Posterior vena cava (tissue), 2 donors: ENCODE measurements at regions of chr4 and their contacts with region 1.

Region 1: DNA sequence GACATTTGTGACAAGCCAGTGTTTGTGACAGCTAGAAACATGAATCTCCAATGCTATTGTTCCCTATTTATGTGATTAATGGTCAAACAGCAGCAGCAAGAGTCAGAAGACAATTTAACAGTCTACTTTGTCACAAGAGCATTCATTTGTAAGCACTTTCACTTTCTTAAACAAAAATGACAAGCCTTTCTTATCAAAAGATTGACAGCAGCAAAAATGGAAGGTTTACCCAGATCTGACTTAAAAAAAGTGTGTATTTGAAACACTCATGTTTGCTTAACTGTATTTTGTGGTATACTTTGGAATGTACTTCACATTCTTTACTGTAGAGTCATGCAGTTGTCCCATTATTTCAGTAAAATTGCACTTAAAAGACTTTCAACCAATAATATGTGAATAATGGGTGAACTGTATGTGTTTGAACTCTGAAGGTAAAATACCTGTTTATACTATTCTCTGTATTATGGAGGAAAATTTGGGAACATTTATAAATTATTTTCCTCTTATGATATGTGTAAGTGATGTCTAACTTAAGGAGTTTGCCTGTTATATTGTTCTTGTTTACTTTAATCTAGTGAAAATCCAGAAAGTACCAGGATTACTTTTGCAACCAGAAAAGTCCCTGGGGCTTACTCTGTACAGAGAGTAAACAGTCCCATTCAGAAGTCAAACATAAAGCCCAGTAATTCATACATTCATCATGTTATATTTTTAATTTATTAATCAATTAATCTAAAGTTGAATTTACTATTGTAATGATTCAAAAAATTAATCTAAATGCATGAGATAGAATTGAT is 314.9 kb upstream of the TRAM1L1 start:
- DNase-seq: no peak

Region 2: GRCh38 chr4:116849620-116850019 is 550.6 kb before region 1 on chr4:
- intact Hi-C with region 1: loop called in 1 of 2 experiments (anchors 10 kb)
- DNase-seq: no peak

Region 3: DNA sequence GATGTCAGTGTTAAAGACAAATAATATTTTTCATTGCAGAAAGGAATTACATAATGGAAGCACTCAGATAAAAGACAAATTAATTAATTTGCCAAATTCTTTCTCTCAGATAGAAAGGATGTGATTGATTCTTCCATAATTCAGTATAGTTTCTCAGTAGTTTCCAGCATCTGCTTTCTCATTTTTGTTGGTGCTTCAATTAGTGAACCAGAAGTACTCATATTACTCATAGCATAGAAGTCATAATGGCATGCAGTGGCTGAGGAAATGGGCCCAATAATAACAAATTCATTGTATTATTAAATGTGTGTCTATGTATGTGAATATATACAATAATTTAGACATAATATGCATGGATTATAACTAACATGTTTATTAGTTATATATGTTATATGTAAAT is 78.5 kb after region 1 on chr4:
- intact Hi-C with region 1: loop called in 1 of 2 experiments (anchors 2 kb)
- DNase-seq: no peak

Region 4: DNA sequence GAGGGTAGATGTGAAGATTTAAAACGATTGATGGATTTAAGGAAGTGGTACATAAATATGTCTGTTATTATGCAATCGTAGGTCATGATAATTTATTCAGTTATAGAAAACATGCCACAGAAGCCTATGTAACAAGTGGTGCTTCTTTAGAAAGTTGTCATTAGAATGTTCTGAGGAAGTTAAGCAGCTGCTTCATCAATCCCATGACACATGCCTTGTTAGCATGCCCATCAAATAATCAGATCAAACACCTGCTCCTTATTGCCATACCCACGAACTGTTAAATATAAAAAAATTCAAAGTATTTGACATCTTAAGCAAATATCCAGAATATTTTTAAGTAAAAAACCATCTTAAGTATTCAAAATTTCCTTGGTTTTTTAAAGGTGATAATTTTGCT is 1659.0 kb after region 1 on chr4:
- intact Hi-C with region 1: no loop called
- DNase-seq: no peak